ENCODE measurements at regions of chr10 and their contacts with region 1.

Region 1: GRCh38 chr10:7410862-7411670 is at the start of gene SFMBT2:
- DNase-seq: peak; percentile 60 to 70 (median 66)
- H3K4me3 ChIP-seq: peak within 1 kb of the TSS; percentile 76 to 91 (median 81)
- H3K4me3 Mint-ChIP-seq: peak within 1 kb of the TSS; percentile 98
- H3K27ac ChIP-seq: no peak within 1 kb of the TSS
- H3K27ac Mint-ChIP-seq: peak within 1 kb of the TSS; percentile 25 to 88 (median 58)
- H3K4me1 ChIP-seq: peaks cover 49 to 61% of the 10 kb centered on the region in 2 donors
- H3K4me1 Mint-ChIP-seq: peaks cover 52% of the 10 kb centered on the region
- H3K27me3 ChIP-seq: peaks cover 17 to 39% of the 10 kb centered on the region in 2 donors
- H3K27me3 Mint-ChIP-seq: peaks cover 31 to 63% (median 57%) of the 10 kb centered on the region in 3 donors
- CTCF ChIP-seq: no peak
- polyA plus RNA-seq, gene SFMBT2: 0.53 to 10.9 (median 1.6) TPM

Region 2: GRCh38 chr10:6667679-6668270 is 743.3 kb before region 1 on chr10:
- intact Hi-C with region 1: loop called (anchors 10 kb)
- DNase-seq: no peak
- H3K4me3 ChIP-seq: no peak overlapping the region
- H3K4me3 Mint-ChIP-seq: peak overlapping the region in 1 of 2 donors; percentile 5
- H3K27ac ChIP-seq: no peak overlapping the region
- H3K27ac Mint-ChIP-seq: no peak overlapping the region
- H3K4me1 ChIP-seq: no peaks in the 10 kb centered on the region
- H3K4me1 Mint-ChIP-seq: no peaks in the 10 kb centered on the region
- H3K27me3 ChIP-seq: no peaks in the 10 kb centered on the region
- H3K27me3 Mint-ChIP-seq: peaks cover 0 to 12% (median 2%) of the 10 kb centered on the region in 3 donors
- CTCF ChIP-seq: peak; percentile 49

Region 3: GRCh38 chr10:6678211-6678803 is 732.8 kb before region 1 on chr10:
- intact Hi-C with region 1: loop called in 1 of 2 experiments (anchors 10 kb)
- DNase-seq: peak; percentile 32 to 53 (median 45)
- H3K4me3 ChIP-seq: no peak overlapping the region
- H3K4me3 Mint-ChIP-seq: peak overlapping the region in 1 of 2 donors; percentile 51
- H3K27ac ChIP-seq: no peak overlapping the region
- H3K27ac Mint-ChIP-seq: no peak overlapping the region
- H3K4me1 ChIP-seq: no peaks in the 10 kb centered on the region
- H3K4me1 Mint-ChIP-seq: peaks cover 6% of the 10 kb centered on the region
- H3K27me3 ChIP-seq: peaks cover 10 to 11% of the 10 kb centered on the region in 2 donors
- H3K27me3 Mint-ChIP-seq: peaks cover 3 to 16% (median 8%) of the 10 kb centered on the region in 3 donors
- CTCF ChIP-seq: peak; percentile 84

Region 4: GRCh38 chr10:6929148-6929830 is 481.8 kb before region 1 on chr10:
- intact Hi-C with region 1: loop called in 1 of 2 experiments (anchors 5 kb)
- DNase-seq: peak; percentile 54 to 59 (median 58)
- H3K4me3 ChIP-seq: no peak overlapping the region
- H3K4me3 Mint-ChIP-seq: peak overlapping the region in 1 of 2 donors; percentile 30
- H3K27ac ChIP-seq: no peak overlapping the region
- H3K27ac Mint-ChIP-seq: peak overlapping the region in 2 of 7 donors; percentile 23 to 36
- H3K4me1 ChIP-seq: peaks cover 36 to 46% of the 10 kb centered on the region in 2 donors
- H3K4me1 Mint-ChIP-seq: peaks cover 45% of the 10 kb centered on the region
- H3K27me3 ChIP-seq: no peaks in the 10 kb centered on the region
- H3K27me3 Mint-ChIP-seq: peaks cover 0 to 5% (median 4%) of the 10 kb centered on the region in 3 donors
- CTCF ChIP-seq: no peak

Region 5: DNA sequence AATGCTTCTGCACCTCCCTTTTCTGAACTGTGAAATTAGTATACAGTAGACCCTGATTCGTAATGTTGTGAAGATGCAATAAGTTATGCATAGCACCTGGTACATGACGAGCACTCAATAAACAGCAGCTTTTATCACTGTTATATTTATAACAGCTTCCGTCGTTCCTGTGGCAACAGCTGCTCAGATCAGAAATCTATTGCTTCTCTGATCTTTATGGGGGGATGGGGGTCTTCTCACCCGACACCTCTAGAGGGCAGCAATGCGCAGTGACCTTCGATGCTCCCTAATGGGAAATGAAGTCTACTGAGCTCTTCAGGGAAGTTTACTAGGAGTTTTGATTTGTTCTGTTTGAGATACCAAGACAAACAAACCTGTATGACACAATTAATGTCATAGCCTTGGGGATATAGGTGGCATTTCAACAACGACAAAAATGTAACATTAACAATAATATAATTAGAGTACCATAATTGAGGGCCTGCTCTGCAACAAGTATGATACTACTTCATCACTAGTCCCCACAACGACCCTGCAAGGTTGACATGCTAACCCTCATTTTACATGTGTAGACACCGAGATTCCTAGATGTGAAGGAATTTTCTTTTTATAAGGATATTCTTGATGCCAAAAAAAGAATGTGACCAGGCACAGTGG is 289.8 kb before region 1 on chr10:
- intact Hi-C with region 1: loop called (anchors 5 kb)
- DNase-seq: peak; percentile 55 to 71 (median 66)
- H3K4me3 ChIP-seq: no peak overlapping the region
- H3K4me3 Mint-ChIP-seq: no peak overlapping the region
- H3K27ac ChIP-seq: no peak overlapping the region
- H3K27ac Mint-ChIP-seq: no peak overlapping the region
- H3K4me1 ChIP-seq: peaks cover 5 to 6% of the 10 kb centered on the region in 2 donors
- H3K4me1 Mint-ChIP-seq: peaks cover 17% of the 10 kb centered on the region
- H3K27me3 ChIP-seq: no peaks in the 10 kb centered on the region
- H3K27me3 Mint-ChIP-seq: peaks cover 0 to 2% (median 0%) of the 10 kb centered on the region in 3 donors
- CTCF ChIP-seq: peak; percentile 86

Region 6: GRCh38 chr10:7184660-7185366 is 226.3 kb before region 1 on chr10:
- intact Hi-C with region 1: loop called (anchors 5 to 10 kb)
- DNase-seq: peak; percentile 95 to 98 (median 98)
- H3K4me3 ChIP-seq: peak overlapping the region; percentile 25 to 67 (median 56)
- H3K4me3 Mint-ChIP-seq: peak overlapping the region; percentile 55 to 86
- H3K27ac ChIP-seq: peak overlapping the region; percentile 92 to 100
- H3K27ac Mint-ChIP-seq: peak overlapping the region; percentile 98 to 100 (median 99)
- H3K4me1 ChIP-seq: peaks cover 86 to 89% of the 10 kb centered on the region in 2 donors
- H3K4me1 Mint-ChIP-seq: peaks cover 76% of the 10 kb centered on the region
- H3K27me3 ChIP-seq: no peaks in the 10 kb centered on the region
- H3K27me3 Mint-ChIP-seq: no peaks in the 10 kb centered on the region
- CTCF ChIP-seq: no peak

Region 7: DNA sequence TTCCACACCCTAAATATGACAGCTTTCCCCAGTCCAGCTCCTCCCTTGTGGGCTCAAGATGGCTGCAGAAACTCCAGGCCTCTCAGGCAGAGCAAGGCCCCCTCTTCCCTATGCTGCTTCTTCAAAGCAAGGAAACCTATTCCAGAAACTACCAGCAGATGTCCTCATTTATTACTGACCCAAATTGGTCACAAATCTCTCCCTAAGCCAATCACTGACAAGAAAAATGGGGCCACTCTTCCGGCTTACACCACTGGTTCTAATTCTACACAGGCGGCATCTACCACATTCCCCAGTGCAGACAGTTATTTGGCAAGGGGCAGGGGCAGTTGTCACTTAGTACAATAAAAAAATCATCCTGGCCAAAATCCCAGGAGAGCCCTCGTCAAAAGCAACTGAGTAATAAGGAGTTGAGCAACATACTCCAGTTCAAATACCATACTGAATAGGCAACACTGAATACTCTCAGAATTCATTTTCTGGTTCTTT is 150.6 kb before region 1 on chr10:
- intact Hi-C with region 1: loop called (anchors 5 to 10 kb)
- DNase-seq: peak; percentile 66 to 76 (median 75)
- H3K4me3 ChIP-seq: peak overlapping the region in 1 of 3 experiments; percentile 43
- H3K4me3 Mint-ChIP-seq: peak overlapping the region; percentile 56 to 72
- H3K27ac ChIP-seq: peak overlapping the region in 1 of 2 donors; percentile 40
- H3K27ac Mint-ChIP-seq: peak overlapping the region in 4 of 7 donors; percentile 56 to 93 (median 73)
- H3K4me1 ChIP-seq: peaks cover 37 to 47% of the 10 kb centered on the region in 2 donors
- H3K4me1 Mint-ChIP-seq: peaks cover 52% of the 10 kb centered on the region
- H3K27me3 ChIP-seq: no peaks in the 10 kb centered on the region
- H3K27me3 Mint-ChIP-seq: no peaks in the 10 kb centered on the region
- CTCF ChIP-seq: peak; percentile 76

Measured in CD14-positive monocyte (primary cell).